PC-9 (cell line): ENCODE measurements at regions of chr7 and their contacts with region 1.

Region 1: DNA sequence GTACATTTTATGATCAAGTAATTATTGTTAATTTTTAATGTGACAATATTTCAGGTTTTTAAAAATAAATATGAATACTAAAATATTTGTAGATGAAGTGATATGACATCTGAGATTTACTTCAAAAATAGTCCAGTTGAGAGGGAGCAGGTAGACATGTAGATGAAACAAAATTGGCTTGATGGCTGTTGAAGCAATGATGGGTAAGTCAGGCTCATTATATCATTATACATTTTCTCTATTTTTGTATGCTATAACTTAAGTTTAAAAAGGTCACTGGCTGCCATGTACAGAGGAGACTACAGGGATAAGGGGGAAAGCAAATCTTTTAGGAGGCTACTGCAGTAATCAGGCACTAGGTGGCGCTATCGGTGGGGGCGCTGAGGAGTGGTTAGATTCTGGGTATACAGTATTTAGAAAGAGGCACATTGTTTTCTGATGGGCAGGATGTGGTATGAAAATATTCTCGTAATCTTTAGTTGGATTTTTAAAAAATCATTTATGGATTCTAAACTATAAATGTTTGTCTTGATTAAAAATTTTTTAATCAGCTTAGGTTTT is 189.8 kb upstream of the IMMP2L start:
- DNase-seq: peak in 1 of 2 experiments; percentile 63
- H3K4me3 ChIP-seq: no peak overlapping the region
- H3K27ac ChIP-seq: no peak overlapping the region
- H3K4me1 ChIP-seq: peaks cover 14% of the 10 kb centered on the region; the same call in 1 of the 2 replicates
- H3K27me3 ChIP-seq: no peaks in the 10 kb centered on the region
- CTCF ChIP-seq: peak; percentile 87

Region 2: GRCh38 chr7:112362731-112363131 is 610.6 kb after region 1 on chr7:
- CTCF ChIA-PET with region 1: interaction called, 14 read pairs
- POLR2A ChIA-PET with region 1: no interaction called
- intact Hi-C with region 1: no loop called
- DNase-seq: no peak
- H3K4me3 ChIP-seq: no peak overlapping the region
- H3K27ac ChIP-seq: no peak overlapping the region
- H3K4me1 ChIP-seq: no peaks in the 10 kb centered on the region
- H3K27me3 ChIP-seq: no peaks in the 10 kb centered on the region
- CTCF ChIP-seq: no peak

Region 3: GRCh38 chr7:112898432-112899290 is 1146.6 kb after region 1 on chr7:
- CTCF ChIA-PET with region 1: no interaction called
- POLR2A ChIA-PET with region 1: no interaction called
- intact Hi-C with region 1: loop called (anchors 5 kb)
- DNase-seq: peak; percentile 31 to 45
- H3K4me3 ChIP-seq: no peak overlapping the region
- H3K27ac ChIP-seq: no peak overlapping the region
- H3K4me1 ChIP-seq: no peaks in the 10 kb centered on the region
- H3K27me3 ChIP-seq: no peaks in the 10 kb centered on the region
- CTCF ChIP-seq: peak; percentile 87